ENCODE measurements at regions of chr11 and their contacts with region 1.

Region 1: GRCh38 chr11:8099291-8099899 is 18.4 kb downstream of the TUB start:
- DNase-seq: peak; percentile 56 to 80
- ATAC-seq: peak; percentile 82 to 92
- H3K4me3 ChIP-seq: no peak overlapping the region
- H3K27ac ChIP-seq: no peak overlapping the region
- H3K4me1 ChIP-seq: no peaks in the 10 kb centered on the region
- CTCF ChIP-seq: peak; percentile 85
- EP300 ChIP-seq: no peak
- POLR2A ChIP-seq: no peak
- RAD21 ChIP-seq: peak; percentile 86

Region 2: DNA sequence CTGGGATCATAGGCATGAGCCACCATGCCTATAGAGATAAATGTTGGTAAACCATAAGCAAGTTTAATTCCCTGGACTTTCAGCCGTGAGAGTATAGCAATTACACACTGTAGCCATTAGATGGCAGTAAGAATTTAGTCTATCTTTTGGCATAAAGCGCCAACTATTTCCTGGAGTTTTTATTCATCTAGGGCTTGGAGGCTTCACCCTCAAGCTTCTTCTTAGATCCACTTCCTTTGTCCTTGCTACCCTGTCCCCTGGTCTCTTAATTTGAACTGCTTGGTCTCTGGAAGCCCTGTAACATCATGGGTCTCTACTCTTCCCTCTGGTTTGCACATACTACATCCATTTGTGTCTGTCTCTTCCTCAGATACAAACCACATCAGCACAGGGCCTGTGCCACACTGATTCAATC is 206.5 kb before region 1 on chr11:
- CTCF ChIA-PET with region 1: interaction called, 13 read pairs
- POLR2A ChIA-PET with region 1: no interaction called
- DNase-seq: peak; percentile 54 to 57
- ATAC-seq: peak; percentile 75 to 92; a peak in 5 of 6 replicates
- H3K4me3 ChIP-seq: no peak overlapping the region
- H3K27ac ChIP-seq: no peak overlapping the region
- H3K4me1 ChIP-seq: no peaks in the 10 kb centered on the region
- CTCF ChIP-seq: peak; percentile 76
- EP300 ChIP-seq: no peak
- POLR2A ChIP-seq: no peak
- RAD21 ChIP-seq: peak; percentile 66 to 70

Region 3: GRCh38 chr11:7924536-7924935 is 174.9 kb before region 1 on chr11:
- CTCF ChIA-PET with region 1: no interaction called
- POLR2A ChIA-PET with region 1: no interaction called
- DNase-seq: no peak
- ATAC-seq: no peak
- H3K4me3 ChIP-seq: no peak overlapping the region
- H3K27ac ChIP-seq: no peak overlapping the region
- H3K4me1 ChIP-seq: no peaks in the 10 kb centered on the region
- CTCF ChIP-seq: no peak
- EP300 ChIP-seq: no peak
- POLR2A ChIP-seq: no peak
- RAD21 ChIP-seq: no peak

Region 4: GRCh38 chr11:8023831-8024555 is 75.4 kb before region 1 on chr11:
- CTCF ChIA-PET with region 1: interaction called, 644 read pairs
- POLR2A ChIA-PET with region 1: no interaction called
- DNase-seq: no peak
- ATAC-seq: no peak
- H3K4me3 ChIP-seq: no peak overlapping the region
- H3K27ac ChIP-seq: no peak overlapping the region
- H3K4me1 ChIP-seq: no peaks in the 10 kb centered on the region
- CTCF ChIP-seq: no peak
- EP300 ChIP-seq: no peak
- POLR2A ChIP-seq: no peak
- RAD21 ChIP-seq: no peak

Region 5: DNA sequence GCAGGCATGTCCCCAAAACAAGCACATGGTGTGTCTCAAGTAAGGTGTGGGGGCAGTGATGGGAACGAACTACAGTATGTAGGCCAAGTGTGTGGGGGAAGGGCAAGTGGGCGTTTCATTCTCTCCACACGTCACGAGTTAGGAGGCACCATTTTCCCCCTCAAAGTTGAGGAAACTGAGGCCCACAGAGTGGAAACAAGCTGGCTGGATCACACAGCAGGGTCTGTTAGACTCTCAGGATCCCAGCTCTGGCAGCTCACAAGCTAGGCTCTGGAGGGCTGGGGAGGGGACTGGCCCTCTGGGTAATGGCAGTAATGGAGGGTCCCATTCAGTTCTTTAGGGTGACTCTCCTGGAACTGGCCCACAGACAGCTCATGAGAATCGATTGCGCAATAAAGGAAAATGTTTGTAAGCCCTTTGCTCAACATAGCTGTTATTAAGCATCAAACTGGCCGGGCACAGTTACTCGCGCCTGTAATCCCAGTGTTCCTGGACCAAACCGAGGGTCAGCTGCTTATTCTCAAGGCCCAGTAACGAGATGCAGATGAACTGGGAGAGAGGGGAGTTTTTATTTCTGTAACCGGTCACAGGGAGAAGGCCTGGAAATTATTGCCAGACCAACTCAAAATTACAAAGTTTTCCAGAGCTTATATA is 42.5 kb before region 1 on chr11:
- CTCF ChIA-PET with region 1: interaction called, 10 read pairs
- POLR2A ChIA-PET with region 1: no interaction called
- DNase-seq: no peak
- ATAC-seq: no peak
- H3K4me3 ChIP-seq: no peak overlapping the region
- H3K27ac ChIP-seq: no peak overlapping the region
- H3K4me1 ChIP-seq: no peaks in the 10 kb centered on the region
- CTCF ChIP-seq: no peak
- EP300 ChIP-seq: no peak
- POLR2A ChIP-seq: no peak
- RAD21 ChIP-seq: no peak

Region 6: GRCh38 chr11:8080674-8081590 is 18.5 kb before region 1 on chr11 and contains the start of gene TUB:
- CTCF ChIA-PET with region 1: interaction called, 143 read pairs
- POLR2A ChIA-PET with region 1: no interaction called
- DNase-seq: peak; percentile 19 to 65
- ATAC-seq: peak; percentile 64 to 78
- H3K4me3 ChIP-seq: peak within 1 kb of the TSS; percentile 80
- H3K27ac ChIP-seq: peak within 1 kb of the TSS; percentile 74 to 88
- H3K4me1 ChIP-seq: peaks cover 6% of the 10 kb centered on the region; the same call in 1 of the 3 replicates
- CTCF ChIP-seq: no peak
- EP300 ChIP-seq: no peak
- POLR2A ChIP-seq: peak; percentile 41
- RAD21 ChIP-seq: no peak
- polyA plus RNA-seq, gene TUB: 11.3 and 11.7 TPM in 2 replicates

Region 7: GRCh38 chr11:8126649-8127289 is 27.4 kb after region 1 on chr11:
- CTCF ChIA-PET with region 1: interaction called, 10 read pairs
- POLR2A ChIA-PET with region 1: no interaction called
- DNase-seq: no peak
- ATAC-seq: no peak
- H3K4me3 ChIP-seq: no peak overlapping the region
- H3K27ac ChIP-seq: no peak overlapping the region
- H3K4me1 ChIP-seq: no peaks in the 10 kb centered on the region
- CTCF ChIP-seq: no peak
- EP300 ChIP-seq: no peak
- POLR2A ChIP-seq: no peak
- RAD21 ChIP-seq: no peak

Region 8: GRCh38 chr11:8209208-8209807 is 109.9 kb after region 1 on chr11:
- CTCF ChIA-PET with region 1: no interaction called
- POLR2A ChIA-PET with region 1: no interaction called
- DNase-seq: no peak
- ATAC-seq: peak in 1 of 2 experiments; percentile 56; a peak in 3 of 6 replicates
- H3K4me3 ChIP-seq: no peak overlapping the region
- H3K27ac ChIP-seq: no peak overlapping the region
- H3K4me1 ChIP-seq: no peaks in the 10 kb centered on the region
- CTCF ChIP-seq: peak; percentile 25; the same call in 2 of the 3 replicates
- EP300 ChIP-seq: no peak
- POLR2A ChIP-seq: no peak
- RAD21 ChIP-seq: no peak